ENCODE measurements at regions of chr9 and their contacts with region 1.

Region 1: GRCh38 chr9:13330396-13331004 is 51.0 kb upstream of the MPDZ start:
- DNase-seq: peak; percentile 41 to 58
- ATAC-seq: peak; percentile 85 to 99 (median 96)
- H3K4me3 ChIP-seq: no peak overlapping the region
- H3K27ac ChIP-seq: peak overlapping the region in 6 of 10 donors; percentile 11 to 60 (median 30)
- H3K4me1 ChIP-seq: peaks cover 0 to 33% (median 13%) of the 10 kb centered on the region in 9 donors
- H3K27me3 ChIP-seq: no peaks in the 10 kb centered on the region
- CTCF ChIP-seq: no peak

Region 2: GRCh38 chr9:12933957-12934356 is 396.5 kb before region 1 on chr9:
- intact Hi-C with region 1: no loop called
- DNase-seq: no peak
- ATAC-seq: no peak
- H3K4me3 ChIP-seq: no peak overlapping the region
- H3K27ac ChIP-seq: no peak overlapping the region
- H3K4me1 ChIP-seq: peaks cover 0 to 5% (median 0%) of the 10 kb centered on the region in 9 donors
- H3K27me3 ChIP-seq: no peaks in the 10 kb centered on the region
- CTCF ChIP-seq: no peak

Region 3: GRCh38 chr9:13279284-13280141 is 51.0 kb before region 1 on chr9 and contains the start of gene MPDZ:
- intact Hi-C with region 1: loop called in 1 of 10 experiments (anchors 10 kb)
- DNase-seq: peak; percentile 56 to 73
- ATAC-seq: peak; percentile 73 to 92 (median 83)
- H3K4me3 ChIP-seq: peak within 1 kb of the TSS; percentile 59 to 88 (median 84)
- H3K27ac ChIP-seq: peak within 1 kb of the TSS; percentile 88 to 99 (median 97)
- H3K4me1 ChIP-seq: peaks cover 9 to 46% (median 30%) of the 10 kb centered on the region in 9 donors
- H3K27me3 ChIP-seq: peaks cover 0 to 23% (median 0%) of the 10 kb centered on the region in 7 donors
- CTCF ChIP-seq: peak in 1 of 9 donors; percentile 19
- total RNA-seq, gene MPDZ: 59.0 to 100 (median 84.1) TPM

Measured in heart right ventricle (tissue), 16 donors.